ENCODE measurements at regions of chr2 and their contacts with region 1.

Region 1: GRCh38 chr2:190121971-190122370 is 59.4 kb upstream of the MSTN start:
- DNase-seq: peak; percentile 9
- ATAC-seq: peak; percentile 88
- H3K4me3 ChIP-seq: no peak overlapping the region
- H3K27ac ChIP-seq: no peak overlapping the region
- H3K4me1 ChIP-seq: no peaks in the 10 kb centered on the region
- H3K27me3 ChIP-seq: no peaks in the 10 kb centered on the region
- CTCF ChIP-seq: peak; percentile 33 to 56 (median 37); a peak in 5 of 6 replicates
- EP300 ChIP-seq: no peak
- POLR2A ChIP-seq: no peak
- RAD21 ChIP-seq: peak; percentile 46

Region 2: DNA sequence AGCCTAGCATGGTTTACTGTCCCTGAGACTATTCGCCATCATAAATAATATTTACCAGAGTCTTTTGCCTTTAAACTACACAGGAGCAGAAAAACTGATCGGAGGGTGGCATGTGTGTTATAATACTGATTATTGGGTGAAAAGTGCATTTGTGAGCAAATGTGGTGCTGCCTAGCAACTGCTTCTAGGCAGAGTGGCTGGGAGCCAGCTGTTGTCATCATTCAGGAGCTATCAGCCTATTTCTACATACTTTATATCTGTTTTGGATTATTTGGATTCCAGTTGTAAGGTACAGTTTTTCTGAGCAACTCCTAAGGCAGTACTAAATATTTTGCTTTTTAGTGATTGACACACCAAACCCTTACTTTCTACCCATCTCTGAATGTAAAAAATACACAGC is 15.6 kb after region 1 on chr2:
- CTCF ChIA-PET with region 1: interaction called, 29 read pairs
- POLR2A ChIA-PET with region 1: interaction called, 8 read pairs
- RAD21 ChIA-PET with region 1: interaction called, 4 read pairs
- SMC1A ChIA-PET with region 1: interaction called, 20 read pairs
- in situ Hi-C with region 1: no loop called
- intact Hi-C with region 1: no loop called
- DNase-seq: no peak
- ATAC-seq: no peak
- H3K4me3 ChIP-seq: no peak overlapping the region
- H3K27ac ChIP-seq: no peak overlapping the region
- H3K4me1 ChIP-seq: no peaks in the 10 kb centered on the region
- H3K27me3 ChIP-seq: no peaks in the 10 kb centered on the region
- CTCF ChIP-seq: no peak
- EP300 ChIP-seq: no peak
- POLR2A ChIP-seq: no peak
- RAD21 ChIP-seq: no peak

Region 3: DNA sequence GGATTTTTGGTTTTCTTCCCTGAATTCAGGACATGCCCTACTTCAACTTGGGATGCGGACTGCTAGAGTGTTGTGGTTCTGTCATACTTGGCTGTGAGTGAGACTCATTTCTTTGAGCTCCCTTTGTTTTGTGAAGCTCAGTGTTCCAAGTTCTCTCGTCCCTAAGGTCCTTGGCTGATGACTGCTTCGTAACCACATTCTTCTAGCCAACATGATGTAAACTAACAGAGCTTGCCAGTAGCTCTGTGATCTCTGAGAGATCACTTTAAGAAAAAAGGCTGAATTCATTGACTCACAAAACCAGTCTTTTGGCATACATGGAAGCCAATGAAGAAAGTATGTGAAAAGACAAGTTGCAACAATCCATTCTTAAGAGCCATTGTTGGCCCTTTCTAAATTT is 37.5 kb after region 1 on chr2:
- CTCF ChIA-PET with region 1: interaction called, 8 read pairs
- POLR2A ChIA-PET with region 1: interaction called, 3 read pairs
- RAD21 ChIA-PET with region 1: interaction called, 5 read pairs
- SMC1A ChIA-PET with region 1: interaction called, 9 read pairs
- in situ Hi-C with region 1: no loop called
- intact Hi-C with region 1: loop called (anchors 2 kb)
- DNase-seq: no peak
- ATAC-seq: no peak
- H3K4me3 ChIP-seq: no peak overlapping the region
- H3K27ac ChIP-seq: no peak overlapping the region
- H3K4me1 ChIP-seq: peaks cover 10% of the 10 kb centered on the region
- H3K27me3 ChIP-seq: no peaks in the 10 kb centered on the region
- CTCF ChIP-seq: no peak
- EP300 ChIP-seq: no peak
- POLR2A ChIP-seq: no peak
- RAD21 ChIP-seq: no peak